Activated CD8-positive, alpha-beta T cell treated with anti-CD3 and anti-CD28 coated beads for 36 hours (primary cell): ENCODE measurements at regions of chr12 and their contacts with region 1.

Region 1: GRCh38 chr12:110893956-110894355 is 26.4 kb downstream of the MYL2 start:
- DNase-seq: no peak
- ATAC-seq: no peak
- H3K4me3 Mint-ChIP-seq: no peak overlapping the region
- H3K27ac Mint-ChIP-seq: no peak overlapping the region
- H3K4me1 Mint-ChIP-seq: peaks cover 4% of the 10 kb centered on the region
- H3K27me3 Mint-ChIP-seq: peaks cover 9% of the 10 kb centered on the region
- CTCF ChIP-seq: no peak

Region 2: DNA sequence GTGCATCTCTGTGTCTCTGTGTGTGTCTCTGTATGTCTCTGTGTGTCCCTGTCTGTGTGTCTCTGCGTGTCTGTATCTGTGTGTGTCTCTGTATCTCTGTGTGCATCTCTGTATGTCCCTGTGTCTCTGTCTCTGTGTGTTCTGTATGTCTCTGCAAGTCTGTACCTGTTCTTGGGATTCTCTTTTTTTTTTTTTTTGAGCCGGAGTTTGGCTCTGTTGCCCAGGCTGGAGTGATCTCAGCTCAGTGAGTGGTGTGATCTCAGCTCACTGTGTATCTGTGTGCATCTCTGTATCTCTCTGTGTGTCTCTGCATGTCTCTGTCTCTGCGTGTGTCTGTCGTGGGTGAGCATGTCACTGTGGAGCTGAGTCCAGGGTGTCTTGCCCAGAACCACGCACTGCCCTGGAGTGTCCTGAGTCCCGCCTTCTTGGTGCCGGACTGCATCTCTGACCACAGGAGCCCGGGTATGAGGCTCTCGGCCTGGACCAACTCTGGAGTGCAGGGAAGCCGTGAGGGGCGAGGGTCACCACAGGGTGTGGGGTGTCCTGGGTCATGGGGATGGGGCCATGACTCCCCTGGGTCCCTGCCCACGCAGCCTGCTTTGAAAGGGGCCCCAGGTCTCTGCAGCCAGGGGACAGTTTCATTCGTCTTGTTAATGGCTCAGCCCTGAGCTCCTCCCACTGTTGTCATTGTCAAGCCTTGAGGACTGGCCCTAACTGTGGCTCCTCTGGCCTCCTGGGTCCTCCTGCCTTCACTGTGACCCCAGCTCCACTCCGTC is 14.6 kb after region 1 on chr12:
- CTCF ChIA-PET with region 1: interaction called, 11 read pairs
- POLR2A ChIA-PET with region 1: no interaction called
- intact Hi-C with region 1: no loop called
- DNase-seq: no peak
- ATAC-seq: no peak
- H3K4me3 Mint-ChIP-seq: no peak overlapping the region
- H3K27ac Mint-ChIP-seq: no peak overlapping the region
- H3K4me1 Mint-ChIP-seq: no peaks in the 10 kb centered on the region
- H3K27me3 Mint-ChIP-seq: peaks cover 7% of the 10 kb centered on the region
- CTCF ChIP-seq: no peak

Region 3: DNA sequence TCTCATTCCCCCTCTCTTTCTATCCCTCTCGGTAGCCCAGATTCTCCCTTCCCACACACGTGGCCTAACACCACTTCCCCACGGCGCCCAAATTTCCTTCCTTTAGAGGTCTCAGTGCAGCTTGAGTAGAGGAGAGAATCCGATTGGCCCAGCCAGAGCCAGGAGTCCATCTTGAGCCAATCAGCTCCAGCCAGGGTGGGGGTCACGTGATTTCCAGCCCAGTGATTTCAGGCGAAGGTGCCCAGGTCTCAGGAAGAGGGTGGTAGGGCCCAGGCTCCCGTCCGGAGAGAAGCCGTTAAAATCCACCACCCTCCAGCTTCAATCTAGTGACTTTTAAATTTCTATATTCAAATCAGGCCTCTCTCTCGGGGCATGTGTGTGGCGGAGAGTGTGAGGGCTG is 71.6 kb after region 1 on chr12:
- CTCF ChIA-PET with region 1: no interaction called
- POLR2A ChIA-PET with region 1: no interaction called
- intact Hi-C with region 1: no loop called
- DNase-seq: no peak
- ATAC-seq: no peak
- H3K4me3 Mint-ChIP-seq: no peak overlapping the region
- H3K27ac Mint-ChIP-seq: no peak overlapping the region
- H3K4me1 Mint-ChIP-seq: no peaks in the 10 kb centered on the region
- H3K27me3 Mint-ChIP-seq: peaks cover 6% of the 10 kb centered on the region
- CTCF ChIP-seq: no peak